Activated CD4-positive, alpha-beta T cell treated with anti-CD3 and anti-CD28 coated beads, Interleukin-2, amount 10 ng/mL, durations not matched to agents 24 days and 14 days (primary cell): ENCODE measurements at regions of chr14 and their contacts with region 1.

Region 1: DNA sequence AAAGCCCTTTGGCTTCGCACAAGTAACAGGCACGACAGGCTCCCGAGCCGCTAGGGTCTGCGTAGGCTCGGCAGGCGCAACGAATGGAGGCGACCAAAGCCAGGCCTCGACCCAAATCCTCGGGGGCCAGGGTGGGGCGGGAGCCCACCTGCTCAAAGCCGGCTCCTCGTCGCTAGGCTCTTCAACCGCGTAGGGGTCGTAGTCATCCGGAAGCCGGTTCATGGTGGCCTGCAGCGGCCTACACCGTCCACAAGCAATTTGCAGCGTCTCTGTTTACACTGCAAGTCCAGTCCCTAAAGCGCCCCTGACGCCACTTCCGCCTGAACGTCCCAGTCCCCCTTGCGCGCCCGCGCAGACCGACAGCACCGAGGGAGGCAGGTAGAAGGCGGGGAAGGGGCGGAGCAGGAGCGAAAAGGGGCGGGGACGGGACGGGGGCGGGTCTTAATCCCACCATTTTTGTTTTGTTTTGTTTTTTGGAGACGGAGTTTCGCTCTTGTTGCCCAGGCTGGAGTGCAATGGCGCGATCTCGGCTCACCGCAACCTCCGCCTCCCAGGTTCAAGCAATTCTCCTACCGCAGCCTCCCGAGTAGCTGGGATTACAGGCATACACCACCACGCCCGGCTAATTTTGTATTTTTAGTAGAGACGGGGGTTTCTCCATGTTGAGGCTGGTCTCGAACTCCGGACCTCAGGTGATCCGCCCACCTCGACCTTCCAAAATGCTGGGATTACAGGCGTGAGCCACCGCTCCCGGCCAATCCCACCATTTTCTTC is at the start of gene EAPP:
- DNase-seq: peak; percentile 98
- H3K4me3 Mint-ChIP-seq: peak within 1 kb of the TSS; percentile 98
- H3K27ac Mint-ChIP-seq: peak within 1 kb of the TSS; percentile 99
- H3K4me1 Mint-ChIP-seq: peaks cover 10% of the 10 kb centered on the region
- H3K27me3 Mint-ChIP-seq: no peaks in the 10 kb centered on the region
- total RNA-seq, gene EAPP: 33.7 and 34.7 TPM in 2 replicates

Region 2: DNA sequence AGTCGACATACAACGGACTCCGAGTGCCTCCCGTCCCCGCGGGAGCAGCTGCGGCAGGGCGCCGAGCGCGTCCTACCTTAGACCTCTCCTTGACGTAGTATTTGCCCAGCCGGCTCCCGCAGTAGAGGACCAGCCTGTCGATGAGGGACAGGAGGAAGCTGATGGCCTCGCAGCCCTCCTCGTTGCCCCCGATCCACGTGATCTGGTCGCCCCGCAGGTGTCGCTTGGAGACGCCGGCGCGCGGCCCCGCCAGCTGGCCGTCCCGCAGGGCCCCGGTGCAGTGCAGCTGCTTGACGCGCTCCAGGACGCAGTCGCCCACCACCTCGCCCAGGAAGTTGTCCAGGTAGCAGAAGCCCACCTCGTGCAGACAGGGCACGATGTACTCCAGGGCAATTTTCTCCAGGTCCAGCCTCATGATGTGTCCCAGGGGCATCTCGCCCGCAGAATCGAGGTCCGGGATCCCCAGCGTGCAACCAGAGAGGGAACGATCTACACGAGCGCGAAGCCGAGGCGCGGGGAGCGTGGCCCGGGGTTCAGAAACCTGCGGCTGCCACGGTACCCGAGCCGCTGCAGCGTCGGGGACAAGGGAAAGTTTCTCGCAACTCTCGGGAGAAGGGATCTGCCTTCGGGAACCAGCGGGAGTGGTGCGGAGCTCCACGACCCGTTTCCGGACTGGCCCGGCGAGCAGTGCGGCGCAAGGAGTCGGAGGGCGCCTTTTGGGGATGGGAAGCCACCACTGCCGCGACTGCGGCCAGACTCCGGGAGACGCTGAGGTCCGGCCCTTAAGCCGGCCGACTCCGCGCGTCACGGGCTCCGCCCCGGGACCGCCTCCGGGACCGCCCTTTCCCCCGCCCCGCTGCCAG is 589.0 kb before region 1 on chr14 and contains the start of gene EGLN3:
- intact Hi-C with region 1: loop called (anchors 5 kb)
- DNase-seq: peak; percentile 95
- H3K4me3 Mint-ChIP-seq: peak within 1 kb of the TSS; percentile 87
- H3K27ac Mint-ChIP-seq: peak within 1 kb of the TSS; percentile 75
- H3K4me1 Mint-ChIP-seq: peaks cover 36% of the 10 kb centered on the region
- H3K27me3 Mint-ChIP-seq: peaks cover 47% of the 10 kb centered on the region
- total RNA-seq, gene EGLN3: 17.4 and 17.6 TPM in 2 replicates

Region 3: GRCh38 chr14:34461334-34462131 is 78.1 kb before region 1 on chr14:
- intact Hi-C with region 1: loop called (anchors 5 kb)
- DNase-seq: peak; percentile 80
- H3K4me3 Mint-ChIP-seq: peak overlapping the region; percentile 92
- H3K27ac Mint-ChIP-seq: peak overlapping the region; percentile 93
- H3K4me1 Mint-ChIP-seq: peaks cover 19% of the 10 kb centered on the region
- H3K27me3 Mint-ChIP-seq: no peaks in the 10 kb centered on the region

Region 4: DNA sequence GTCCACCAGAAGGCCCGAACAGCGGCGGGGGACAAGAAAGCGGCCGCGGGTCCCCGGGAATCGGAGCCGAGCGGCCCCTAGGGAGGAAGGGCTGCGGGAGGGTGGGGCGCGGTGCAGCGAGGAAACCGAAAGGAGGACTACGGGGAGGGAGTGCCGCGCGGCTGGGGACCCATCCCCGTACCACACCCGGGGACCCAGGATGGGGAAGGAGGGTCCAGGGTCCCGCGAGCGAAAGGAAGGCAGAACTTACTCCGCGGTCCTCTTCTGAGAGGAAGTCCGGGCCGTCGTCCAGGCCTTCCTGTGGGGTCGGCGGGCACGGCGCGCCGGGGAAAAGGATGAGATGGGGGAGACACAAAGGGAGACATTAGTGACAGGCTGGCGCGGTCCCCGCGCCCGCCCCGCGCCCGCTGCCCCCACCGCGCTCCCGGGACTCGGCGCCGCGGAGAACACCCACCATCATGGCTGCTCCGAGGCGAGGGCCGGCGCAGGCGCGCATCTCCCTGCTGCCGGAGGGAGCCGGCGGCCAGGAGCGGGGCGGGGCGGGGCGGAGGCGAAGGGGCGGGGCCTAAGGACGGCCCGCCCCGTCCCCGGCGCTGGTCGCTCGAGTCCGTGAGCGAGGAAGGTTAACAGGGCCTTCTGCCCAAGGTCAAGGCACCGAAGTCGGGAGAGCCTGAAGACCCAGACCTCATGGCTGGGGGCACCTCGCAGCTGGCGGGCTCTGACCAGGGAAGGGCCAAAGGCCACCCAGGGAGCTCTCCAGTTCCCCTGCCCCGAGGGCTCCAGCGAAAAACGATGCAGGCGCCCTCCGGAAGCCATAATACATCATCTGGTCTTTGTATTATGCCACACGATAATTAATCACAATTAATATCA is 90.3 kb after region 1 on chr14 and contains the start of gene SNX6:
- intact Hi-C with region 1: loop called (anchors 5 kb)
- DNase-seq: peak; percentile 94
- H3K4me3 Mint-ChIP-seq: peak within 1 kb of the TSS; percentile 91
- H3K27ac Mint-ChIP-seq: peak within 1 kb of the TSS; percentile 91
- H3K4me1 Mint-ChIP-seq: peaks cover 25% of the 10 kb centered on the region
- H3K27me3 Mint-ChIP-seq: peaks cover 13% of the 10 kb centered on the region
- total RNA-seq, gene SNX6: 68.6 and 70.4 TPM in 2 replicates

Region 5: GRCh38 chr14:36315159-36315853 is 1775.7 kb after region 1 on chr14:
- intact Hi-C with region 1: loop called (anchors 5 kb)
- DNase-seq: peak; percentile 62
- H3K4me3 Mint-ChIP-seq: peak overlapping the region; percentile 19
- H3K27ac Mint-ChIP-seq: peak overlapping the region; percentile 83
- H3K4me1 Mint-ChIP-seq: peaks cover 19% of the 10 kb centered on the region
- H3K27me3 Mint-ChIP-seq: no peaks in the 10 kb centered on the region